Naive thymus-derived CD8-positive, alpha-beta T cell (primary cell): ENCODE measurements at regions of chr17 and their contacts with region 1.

Region 1: GRCh38 chr17:82236142-82236981 is 7.5 kb downstream of the SLC16A3 start:
- DNase-seq: peak; percentile 50 to 81 (median 69)
- ATAC-seq: peak; percentile 38 to 46
- H3K4me3 Mint-ChIP-seq: peak overlapping the region in 1 of 10 donors; percentile 29
- H3K27ac Mint-ChIP-seq: peak overlapping the region in 5 of 10 donors; percentile 15 to 77 (median 53)
- H3K4me1 Mint-ChIP-seq: peaks cover 16 to 52% (median 40%) of the 10 kb centered on the region in 4 donors
- H3K27me3 Mint-ChIP-seq: peaks cover 0 to 1% (median 0%) of the 10 kb centered on the region in 5 donors

Region 2: DNA sequence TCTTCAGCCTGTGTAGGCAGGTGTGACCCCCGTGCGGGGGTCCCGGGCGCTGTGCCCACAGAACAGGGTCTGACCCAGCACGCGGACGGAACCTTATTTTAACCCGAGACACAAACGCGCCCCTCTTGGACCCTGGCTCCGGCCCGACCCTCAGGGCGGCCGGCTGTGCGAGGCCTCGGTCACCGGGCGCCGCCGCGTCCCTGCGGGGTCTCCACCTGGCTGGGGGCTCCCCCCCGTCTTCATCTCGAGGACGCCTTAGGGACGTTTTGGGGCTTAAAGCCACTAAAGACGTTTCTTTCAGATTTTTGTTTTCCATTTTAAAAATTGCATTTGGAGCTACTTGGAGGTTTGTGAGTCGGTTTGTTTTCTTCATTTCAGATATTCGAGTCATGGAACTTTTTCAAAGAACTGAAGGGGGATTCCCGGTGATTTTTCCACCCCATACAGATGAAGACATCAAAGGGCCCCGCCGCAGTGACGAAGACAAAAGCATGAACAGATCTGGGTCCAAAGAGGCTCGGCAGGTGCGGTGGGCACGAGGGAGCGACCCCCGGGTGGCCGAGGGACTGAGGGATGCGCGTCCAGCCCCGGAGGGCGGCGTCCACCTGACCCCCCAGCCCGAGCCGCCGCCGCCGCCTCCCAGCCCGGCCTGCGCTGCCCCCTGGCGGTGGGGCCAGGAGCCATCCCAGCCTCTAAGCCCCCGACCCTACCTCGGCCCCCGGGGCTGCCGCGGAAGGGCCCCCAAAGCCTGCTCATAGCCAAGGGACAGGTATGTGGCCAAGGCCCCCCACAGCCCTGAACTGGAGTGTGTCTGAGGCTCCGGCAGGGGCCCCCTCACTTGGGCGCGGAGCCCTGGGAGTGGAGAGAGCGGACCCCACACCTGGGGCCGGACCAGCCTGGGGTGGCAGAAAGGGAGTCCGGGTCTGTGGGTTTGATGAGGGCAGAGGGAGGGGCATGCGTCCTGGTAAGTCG is 84.9 kb after region 1 on chr17:
- POLR2A ChIA-PET with region 1: interaction called, 11 read pairs
- DNase-seq: peak; percentile 54 to 92 (median 82)
- ATAC-seq: peak; percentile 55 to 62
- H3K4me3 Mint-ChIP-seq: peak overlapping the region; percentile 63 to 86 (median 80)
- H3K27ac Mint-ChIP-seq: peak overlapping the region; percentile 49 to 97 (median 90)
- H3K4me1 Mint-ChIP-seq: peaks cover 6 to 21% (median 14%) of the 10 kb centered on the region in 4 donors
- H3K27me3 Mint-ChIP-seq: no peaks in the 10 kb centered on the region